ENCODE measurements at regions of chr17 and their contacts with region 1.

Region 1: GRCh38 chr17:44947461-44948314 is at the start of gene KIF18B:
- DNase-seq: peak; percentile 90
- H3K4me3 Mint-ChIP-seq: peak within 1 kb of the TSS; percentile 95
- H3K27ac Mint-ChIP-seq: peak within 1 kb of the TSS; percentile 92
- H3K4me1 Mint-ChIP-seq: peaks cover 37% of the 10 kb centered on the region
- H3K27me3 Mint-ChIP-seq: peaks cover 2% of the 10 kb centered on the region
- total RNA-seq, gene KIF18B: 41.4 and 42.8 TPM in 2 replicates

Region 2: DNA sequence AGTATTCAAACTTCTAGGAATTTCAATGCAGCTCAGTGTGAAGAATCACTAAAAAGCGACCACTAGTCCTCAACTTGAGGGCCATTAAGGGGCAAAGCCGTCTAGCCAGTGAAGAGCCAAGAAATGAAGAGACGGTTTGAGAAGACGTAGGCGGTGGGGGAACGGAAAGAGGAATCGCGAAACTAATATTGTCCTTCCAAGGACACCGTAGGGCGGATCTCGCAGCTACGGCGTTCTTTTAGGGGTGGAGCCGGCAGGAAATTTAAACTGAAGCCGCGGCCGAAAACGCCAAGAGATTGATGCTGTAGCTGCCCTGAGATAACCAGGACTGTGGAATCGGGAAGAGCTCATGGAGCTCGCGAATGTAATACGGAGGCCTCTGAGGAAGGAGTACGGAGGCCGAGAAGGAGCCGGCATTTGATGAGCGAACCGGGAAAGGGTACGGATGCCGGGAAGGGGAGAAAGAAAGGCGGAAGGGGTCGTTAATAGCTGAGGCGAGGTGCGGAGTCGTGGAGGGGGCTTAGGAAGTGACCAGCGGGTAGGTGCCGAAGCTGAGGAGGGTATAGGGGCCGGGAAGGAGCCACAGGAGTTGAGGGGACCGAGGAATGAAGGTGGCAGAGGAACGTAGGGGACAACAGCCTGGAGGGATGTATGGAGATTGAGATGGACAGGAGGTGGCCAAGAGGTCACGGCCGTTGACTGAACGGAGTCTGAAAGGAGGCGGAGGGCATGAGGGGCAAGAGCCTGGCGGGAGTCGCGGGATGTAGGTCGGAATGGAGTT is 239.1 kb before region 1 on chr17 and contains the start of gene DBF4B:
- intact Hi-C with region 1: no loop called
- DNase-seq: peak; percentile 81
- H3K4me3 Mint-ChIP-seq: no peak within 1 kb of the TSS
- H3K27ac Mint-ChIP-seq: no peak within 1 kb of the TSS
- H3K4me1 Mint-ChIP-seq: peaks cover 5% of the 10 kb centered on the region
- H3K27me3 Mint-ChIP-seq: peaks cover 7% of the 10 kb centered on the region
- total RNA-seq, gene DBF4B: 22.5 and 22.8 TPM in 2 replicates

Region 3: DNA sequence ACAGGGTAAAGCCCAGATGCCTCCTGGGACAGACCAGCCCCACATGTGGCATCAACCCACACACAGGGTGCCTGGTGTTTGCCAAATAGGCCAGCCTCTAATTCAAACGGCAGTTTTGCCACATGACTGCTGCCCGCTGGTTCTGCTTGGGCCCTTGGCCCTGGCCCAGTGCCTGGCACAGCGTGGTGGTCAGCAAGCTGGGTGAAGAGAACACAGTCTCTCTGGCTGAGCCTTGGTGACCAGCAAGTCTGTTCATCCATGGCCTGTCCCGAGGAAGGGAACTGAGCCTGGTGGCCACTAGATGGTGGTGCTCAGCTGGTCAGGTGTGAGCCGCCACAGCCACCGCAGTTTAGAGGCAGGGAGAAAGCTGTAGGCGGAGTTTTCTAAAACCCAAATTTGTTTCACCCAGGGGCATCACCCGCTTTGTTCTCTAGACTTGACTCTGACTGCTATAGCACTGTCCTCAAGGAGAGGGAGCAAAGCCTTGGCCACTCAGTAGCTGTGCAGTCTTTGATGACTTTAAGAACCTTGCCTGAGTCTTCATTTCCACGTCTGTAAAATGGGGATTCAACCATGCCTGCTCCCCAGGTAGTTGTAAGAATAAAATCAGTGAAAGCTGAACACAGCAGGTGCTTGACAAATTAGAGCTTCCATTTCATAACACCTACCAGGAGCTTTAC is 27.7 kb before region 1 on chr17:
- intact Hi-C with region 1: loop called (anchors 2 kb)
- DNase-seq: peak; percentile 50
- H3K4me3 Mint-ChIP-seq: no peak overlapping the region
- H3K27ac Mint-ChIP-seq: no peak overlapping the region
- H3K4me1 Mint-ChIP-seq: peaks cover 8% of the 10 kb centered on the region
- H3K27me3 Mint-ChIP-seq: peaks cover 25% of the 10 kb centered on the region

Region 4: GRCh38 chr17:45021607-45022287 is 74.1 kb after region 1 on chr17:
- intact Hi-C with region 1: loop called (anchors 2 kb)
- DNase-seq: peak; percentile 62
- H3K4me3 Mint-ChIP-seq: no peak overlapping the region
- H3K27ac Mint-ChIP-seq: no peak overlapping the region
- H3K4me1 Mint-ChIP-seq: peaks cover 22% of the 10 kb centered on the region
- H3K27me3 Mint-ChIP-seq: peaks cover 30% of the 10 kb centered on the region

Region 5: DNA sequence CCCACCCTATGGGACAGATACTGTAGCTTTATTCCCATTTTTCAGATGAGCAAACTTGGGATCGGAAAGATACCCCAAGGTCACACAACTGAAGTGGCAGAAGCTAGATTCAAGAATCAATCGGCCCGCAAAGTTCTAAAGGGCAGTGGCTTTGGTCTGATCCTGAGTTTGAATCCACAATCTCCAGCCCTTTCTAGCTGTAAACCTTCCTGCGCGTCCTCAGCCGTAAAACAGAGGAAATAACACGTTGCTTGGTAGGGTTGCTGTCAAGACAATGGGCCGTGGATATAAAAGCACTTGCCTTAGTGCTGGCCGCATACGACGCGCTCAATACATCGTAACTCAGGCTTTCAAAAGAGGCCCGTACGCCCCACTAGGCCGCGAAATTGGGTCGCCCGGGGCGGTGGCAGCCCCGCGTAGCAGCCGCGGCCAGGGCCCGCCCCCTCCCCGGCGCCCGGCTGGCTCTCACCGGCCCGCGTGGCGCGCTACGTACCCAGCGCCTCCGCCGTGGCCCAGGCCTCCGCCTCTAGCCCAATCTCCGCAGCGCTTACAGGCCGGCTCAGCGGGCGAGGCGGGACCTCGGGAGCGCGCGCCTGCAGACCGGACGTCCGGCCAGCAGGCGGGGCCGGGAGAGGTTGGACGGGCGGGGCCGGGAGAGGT is 103.5 kb after region 1 on chr17 and contains the start of gene DCAKD:
- intact Hi-C with region 1: loop called (anchors 1 kb)
- DNase-seq: peak; percentile 93
- H3K4me3 Mint-ChIP-seq: peak within 1 kb of the TSS; percentile 92
- H3K27ac Mint-ChIP-seq: peak within 1 kb of the TSS; percentile 94
- H3K4me1 Mint-ChIP-seq: peaks cover 47% of the 10 kb centered on the region
- H3K27me3 Mint-ChIP-seq: no peaks in the 10 kb centered on the region
- total RNA-seq, gene DCAKD: 24.0 and 24.9 TPM in 2 replicates